Activated T-helper 1 cell treated with anti-CD3 and anti-CD28 coated beads, Interleukin-12 subunit alpha, Interleukin-12 subunit beta, Interleukin-2, Interleukin-4 antibody, amounts not matched to agents 30 ng/mL and 10 ng/mL and 1 ng/mL, durations not matched to agents 14 hours and 24 hours and 36 hours (primary cell): ENCODE measurements at regions of chr17 and their contacts with region 1.

Region 1: DNA sequence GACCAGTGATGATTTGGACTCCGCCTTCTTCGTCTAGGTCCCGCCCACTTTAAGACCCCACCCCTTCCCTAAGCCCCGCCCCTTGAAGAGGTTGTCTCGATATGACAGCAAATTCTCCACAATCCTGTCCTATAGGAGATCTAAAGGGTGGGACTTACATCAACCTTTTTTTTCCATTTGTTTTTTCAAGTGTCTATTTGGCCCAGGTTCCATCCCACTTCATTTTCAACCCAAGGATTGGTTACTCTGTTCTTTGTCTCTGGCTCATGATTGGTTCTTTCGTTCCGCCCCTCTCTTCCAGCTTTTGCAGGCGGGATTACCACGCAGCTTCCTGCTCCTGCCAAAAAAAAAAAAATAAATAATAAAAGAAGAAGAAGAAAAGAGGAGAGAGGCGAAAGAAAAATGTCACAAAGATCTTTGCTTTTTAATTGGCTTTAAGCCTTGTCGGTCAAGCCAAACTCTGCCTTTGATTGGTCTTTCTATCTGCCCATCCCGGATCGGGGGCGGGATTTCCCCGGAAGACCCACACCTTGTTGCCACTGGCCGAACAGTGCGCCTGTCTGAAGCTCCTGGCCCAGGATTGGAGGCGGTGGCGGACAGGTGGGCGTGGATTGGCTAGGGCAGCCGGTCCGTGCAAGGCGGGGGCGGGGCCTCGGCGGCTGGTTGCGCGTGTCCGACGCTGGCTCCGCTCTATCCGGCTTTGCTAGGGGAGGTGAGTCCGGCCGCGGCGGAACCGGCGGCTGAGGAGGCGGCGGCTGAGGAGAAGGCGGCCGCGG is 1.2 kb upstream of the NLK start:
- DNase-seq: peak; percentile 100
- H3K4me3 Mint-ChIP-seq: peak overlapping the region; percentile 79
- H3K27ac Mint-ChIP-seq: peak overlapping the region; percentile 80
- H3K4me1 Mint-ChIP-seq: peaks cover 46% of the 10 kb centered on the region
- H3K27me3 Mint-ChIP-seq: peaks cover 10% of the 10 kb centered on the region

Region 2: DNA sequence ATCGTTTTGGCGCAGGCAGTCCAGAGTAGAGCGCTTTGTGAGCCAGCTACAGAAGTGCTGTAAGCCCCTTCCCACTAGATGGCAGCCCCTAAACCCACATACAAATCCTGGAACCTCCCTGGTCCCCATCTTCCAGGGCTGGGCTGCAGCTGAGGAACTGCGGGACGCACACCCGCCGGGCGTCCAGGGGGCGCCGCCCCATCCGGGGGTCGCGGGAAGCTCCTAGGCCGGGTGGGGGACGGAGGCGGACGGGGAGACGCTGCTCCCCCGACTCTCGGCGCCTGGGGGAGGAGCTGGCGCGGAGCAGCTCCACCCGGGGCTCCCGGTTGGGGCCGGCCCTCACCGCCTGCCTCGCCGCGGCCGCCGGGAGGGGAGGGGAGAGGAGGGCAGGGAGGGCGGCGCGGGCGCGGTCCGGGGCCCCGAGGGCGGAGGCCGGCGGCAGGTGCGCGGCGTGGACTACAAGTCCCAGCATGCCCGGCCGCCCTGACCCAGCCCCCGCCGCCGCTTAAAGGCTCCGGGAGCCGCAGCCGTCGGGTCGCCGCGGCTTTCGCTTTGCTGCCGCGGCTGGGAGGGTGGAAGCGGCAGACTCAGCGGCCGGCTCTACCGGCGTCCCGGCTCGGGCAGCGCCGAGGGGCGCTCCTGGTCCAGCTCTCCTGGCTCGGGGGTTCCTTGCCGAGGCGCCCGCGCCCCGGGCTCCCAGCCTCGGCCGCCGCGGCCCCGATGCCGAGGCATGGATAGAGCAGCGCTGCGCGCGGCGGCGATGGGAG is 585.2 kb before region 1 on chr17 and contains the start of gene KSR1:
- intact Hi-C with region 1: loop called (anchors 5 kb)
- DNase-seq: peak; percentile 81
- H3K4me3 Mint-ChIP-seq: peak within 1 kb of the TSS; percentile 99
- H3K27ac Mint-ChIP-seq: peak within 1 kb of the TSS; percentile 94
- H3K4me1 Mint-ChIP-seq: peaks cover 52% of the 10 kb centered on the region
- H3K27me3 Mint-ChIP-seq: peaks cover 3% of the 10 kb centered on the region
- total RNA-seq, gene KSR1: 119 and 122 TPM in 2 replicates

Region 3: GRCh38 chr17:27892866-27893769 is 148.1 kb before region 1 on chr17 and contains the start of gene LYRM9:
- intact Hi-C with region 1: loop called (anchors 1 kb)
- DNase-seq: peak; percentile 92
- H3K4me3 Mint-ChIP-seq: peak within 1 kb of the TSS; percentile 85
- H3K27ac Mint-ChIP-seq: peak within 1 kb of the TSS; percentile 85
- H3K4me1 Mint-ChIP-seq: peaks cover 29% of the 10 kb centered on the region
- H3K27me3 Mint-ChIP-seq: peaks cover 40% of the 10 kb centered on the region
- total RNA-seq, gene LYRM9: 1.9 and 2.9 TPM in 2 replicates

Region 4: GRCh38 chr17:28008542-28008941 is 32.7 kb before region 1 on chr17:
- intact Hi-C with region 1: no loop called
- DNase-seq: no peak
- H3K4me3 Mint-ChIP-seq: no peak overlapping the region
- H3K27ac Mint-ChIP-seq: no peak overlapping the region
- H3K4me1 Mint-ChIP-seq: no peaks in the 10 kb centered on the region
- H3K27me3 Mint-ChIP-seq: peaks cover 6% of the 10 kb centered on the region

Region 5: DNA sequence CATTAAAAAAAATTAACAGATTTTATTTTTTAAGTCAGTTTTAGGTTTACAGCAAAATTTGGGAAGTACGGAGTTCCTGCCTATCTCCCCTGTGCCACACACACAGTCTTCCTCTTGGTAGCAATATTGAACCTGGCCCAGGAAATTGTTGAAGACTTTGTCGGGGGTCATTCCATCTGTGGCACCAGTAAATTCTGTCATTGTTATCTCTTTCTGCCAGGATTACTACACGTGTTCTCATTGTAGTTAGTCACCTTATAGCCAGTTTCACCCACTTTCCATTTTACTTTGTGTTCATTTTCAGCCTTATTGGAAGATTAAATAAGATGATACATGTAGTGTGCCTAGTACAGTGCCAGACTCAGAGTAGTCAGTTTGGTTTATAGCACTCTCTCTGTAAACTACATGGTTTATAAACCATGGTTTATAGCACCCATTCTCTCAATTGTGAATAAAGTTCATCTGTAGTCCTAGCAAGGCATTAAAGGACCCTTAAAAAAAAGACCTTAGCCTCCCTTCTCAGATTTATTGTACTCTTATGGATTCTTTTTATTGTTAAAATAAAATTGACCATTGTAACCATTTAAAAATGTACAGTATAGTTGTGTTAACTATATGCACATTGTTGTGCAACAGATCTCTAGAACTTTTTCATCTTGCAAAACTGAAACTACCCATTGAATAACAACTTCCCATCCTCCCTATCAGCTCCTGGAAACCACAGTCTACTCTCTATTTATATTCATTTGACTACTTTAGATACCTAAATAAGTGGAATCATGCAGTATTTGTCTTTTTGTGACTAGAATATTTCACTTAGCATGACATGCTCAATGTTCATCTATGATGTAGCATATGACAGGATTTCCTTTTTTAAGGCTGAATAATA is 37.3 kb after region 1 on chr17:
- intact Hi-C with region 1: loop called (anchors 2 kb)
- DNase-seq: no peak
- H3K4me3 Mint-ChIP-seq: no peak overlapping the region
- H3K27ac Mint-ChIP-seq: no peak overlapping the region
- H3K4me1 Mint-ChIP-seq: peaks cover 30% of the 10 kb centered on the region
- H3K27me3 Mint-ChIP-seq: no peaks in the 10 kb centered on the region

Region 6: DNA sequence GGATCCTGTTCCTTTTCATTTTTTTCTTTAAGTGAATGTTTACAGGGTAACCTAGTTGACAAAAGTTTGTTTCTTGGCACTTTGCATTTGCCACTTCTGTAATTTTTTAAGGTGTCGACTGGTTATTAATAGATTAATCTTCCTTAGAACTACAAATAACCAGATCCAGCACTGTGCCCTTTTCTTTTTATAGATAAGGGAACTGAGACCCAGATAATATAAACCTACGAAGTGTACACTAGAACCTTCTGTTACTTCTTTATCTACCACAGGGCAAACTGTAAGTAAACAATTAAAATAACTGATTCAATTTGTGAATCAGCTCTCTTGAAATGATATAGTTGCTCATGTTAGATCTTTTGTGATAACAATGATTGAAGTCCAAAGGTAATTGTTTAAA is 56.6 kb after region 1 on chr17:
- intact Hi-C with region 1: no loop called
- DNase-seq: no peak
- H3K4me3 Mint-ChIP-seq: no peak overlapping the region
- H3K27ac Mint-ChIP-seq: no peak overlapping the region
- H3K4me1 Mint-ChIP-seq: no peaks in the 10 kb centered on the region
- H3K27me3 Mint-ChIP-seq: no peaks in the 10 kb centered on the region

Region 7: DNA sequence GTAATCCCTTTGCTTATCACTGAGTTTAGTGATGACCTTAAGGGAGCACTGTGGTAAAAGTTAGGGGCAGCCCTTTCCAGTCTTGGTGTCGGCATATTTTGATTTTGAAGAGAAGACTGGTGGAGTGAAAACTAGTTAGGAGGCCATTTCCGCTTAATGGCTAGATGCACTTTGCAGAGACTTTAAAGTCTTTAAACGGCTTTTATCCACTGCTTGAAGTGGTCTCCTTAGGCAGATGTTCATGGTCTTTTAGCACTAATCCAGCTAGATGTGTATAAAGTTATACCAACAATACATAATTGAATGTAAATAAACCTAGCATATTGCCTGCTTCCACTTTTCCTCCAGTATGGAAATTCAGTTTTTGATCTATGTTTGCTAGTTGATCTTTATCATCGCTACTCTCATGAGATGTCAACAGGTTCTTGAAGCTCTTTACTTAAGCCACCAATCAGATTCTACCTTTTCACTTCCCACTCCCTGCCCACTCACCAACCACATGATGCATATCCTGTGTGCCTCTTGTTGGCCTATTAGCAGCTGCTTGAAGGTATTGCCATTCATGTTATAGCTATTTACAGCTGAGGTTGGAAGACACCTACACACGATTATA is 133.2 kb after region 1 on chr17:
- intact Hi-C with region 1: loop called (anchors 5 kb)
- DNase-seq: peak; percentile 26
- H3K4me3 Mint-ChIP-seq: peak overlapping the region; percentile 21
- H3K27ac Mint-ChIP-seq: peak overlapping the region; percentile 69
- H3K4me1 Mint-ChIP-seq: peaks cover 38% of the 10 kb centered on the region
- H3K27me3 Mint-ChIP-seq: no peaks in the 10 kb centered on the region

Region 8: DNA sequence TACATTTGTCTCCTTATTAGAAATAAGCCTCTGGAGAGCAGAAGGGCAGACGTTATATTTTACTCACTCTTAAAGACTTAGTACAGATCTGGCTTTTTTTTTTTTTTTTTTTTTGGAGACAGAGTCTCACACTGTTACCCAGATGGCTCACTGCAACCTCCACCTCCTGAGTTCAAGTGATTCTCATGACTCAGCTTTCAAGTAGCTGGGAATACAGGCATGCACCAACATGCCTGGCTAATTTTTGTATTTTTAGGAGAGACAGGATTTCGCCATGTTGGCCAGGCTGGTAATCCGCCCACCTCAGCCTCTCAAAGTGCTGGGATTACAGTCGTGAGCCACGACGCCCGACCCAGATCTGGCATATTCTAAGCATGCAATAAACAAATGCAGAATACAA is 241.3 kb after region 1 on chr17:
- intact Hi-C with region 1: loop called (anchors 5 kb)
- DNase-seq: no peak
- H3K4me3 Mint-ChIP-seq: no peak overlapping the region
- H3K27ac Mint-ChIP-seq: no peak overlapping the region
- H3K4me1 Mint-ChIP-seq: peaks cover 11% of the 10 kb centered on the region
- H3K27me3 Mint-ChIP-seq: peaks cover 42% of the 10 kb centered on the region

Region 9: DNA sequence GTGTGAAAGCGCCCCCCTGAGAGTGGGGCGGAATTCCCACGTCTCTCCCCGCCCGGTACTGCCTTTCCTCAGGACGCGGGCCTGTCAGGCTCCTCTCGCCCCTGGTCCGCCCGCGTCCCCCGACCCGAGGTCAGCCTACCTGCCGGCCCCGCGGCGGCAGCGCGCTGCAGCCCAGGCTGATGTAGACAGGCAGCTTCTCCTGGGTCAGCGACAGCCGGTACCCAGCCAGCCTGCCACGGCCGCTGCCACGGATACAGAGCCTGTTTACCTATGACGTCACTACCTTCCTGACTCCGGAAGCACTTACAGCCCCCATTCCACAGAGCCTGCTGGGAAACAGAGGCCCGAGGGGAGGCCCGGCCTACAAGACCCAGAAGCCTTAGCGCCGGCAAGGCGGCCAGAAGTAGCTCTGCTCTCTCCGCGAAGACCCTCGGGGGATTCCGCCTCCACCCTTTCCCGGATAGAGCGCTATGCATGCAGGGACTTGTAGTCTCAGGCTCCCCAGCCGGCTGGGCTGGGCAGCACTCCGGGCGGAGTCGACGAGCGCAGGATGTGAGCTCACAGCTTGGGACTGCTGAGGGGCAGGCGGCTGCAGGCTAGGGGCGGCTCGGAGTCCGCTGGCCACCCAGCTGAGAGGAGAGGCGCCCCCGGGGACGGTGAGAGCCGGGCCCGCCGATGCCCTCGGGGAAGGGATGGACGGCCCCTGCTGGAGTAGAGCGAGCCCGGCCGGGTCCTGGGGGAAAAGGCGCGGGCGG is 294.1 kb after region 1 on chr17 and contains the starts of genes IFT20 and TNFAIP1:
- intact Hi-C with region 1: loop called (anchors 1 kb)
- DNase-seq: peak; percentile 98
- H3K4me3 Mint-ChIP-seq: peak within 1 kb of the TSS; percentile 99
- H3K27ac Mint-ChIP-seq: peak within 1 kb of the TSS; percentile 97
- H3K4me1 Mint-ChIP-seq: peaks cover 45% of the 10 kb centered on the region
- H3K27me3 Mint-ChIP-seq: no peaks in the 10 kb centered on the region
- total RNA-seq, gene IFT20: 21.3 and 25.8 TPM in 2 replicates
- total RNA-seq, gene TNFAIP1: 35.1 and 39.9 TPM in 2 replicates